Endothelial cell of umbilical vein (primary cell): ENCODE measurements at regions of chr3 and their contacts with region 1.

Region 1: GRCh38 chr3:29759411-29760225 is 478.7 kb downstream of the RBMS3 start:
- DNase-seq: peak; percentile 53
- H3K4me3 ChIP-seq: no peak overlapping the region
- H3K27ac ChIP-seq: peak overlapping the region; percentile 98
- H3K4me1 ChIP-seq: peaks cover 47% of the 10 kb centered on the region
- H3K27me3 ChIP-seq: no peaks in the 10 kb centered on the region
- CTCF ChIP-seq: no peak
- POLR2A ChIP-seq: no peak

Region 2: DNA sequence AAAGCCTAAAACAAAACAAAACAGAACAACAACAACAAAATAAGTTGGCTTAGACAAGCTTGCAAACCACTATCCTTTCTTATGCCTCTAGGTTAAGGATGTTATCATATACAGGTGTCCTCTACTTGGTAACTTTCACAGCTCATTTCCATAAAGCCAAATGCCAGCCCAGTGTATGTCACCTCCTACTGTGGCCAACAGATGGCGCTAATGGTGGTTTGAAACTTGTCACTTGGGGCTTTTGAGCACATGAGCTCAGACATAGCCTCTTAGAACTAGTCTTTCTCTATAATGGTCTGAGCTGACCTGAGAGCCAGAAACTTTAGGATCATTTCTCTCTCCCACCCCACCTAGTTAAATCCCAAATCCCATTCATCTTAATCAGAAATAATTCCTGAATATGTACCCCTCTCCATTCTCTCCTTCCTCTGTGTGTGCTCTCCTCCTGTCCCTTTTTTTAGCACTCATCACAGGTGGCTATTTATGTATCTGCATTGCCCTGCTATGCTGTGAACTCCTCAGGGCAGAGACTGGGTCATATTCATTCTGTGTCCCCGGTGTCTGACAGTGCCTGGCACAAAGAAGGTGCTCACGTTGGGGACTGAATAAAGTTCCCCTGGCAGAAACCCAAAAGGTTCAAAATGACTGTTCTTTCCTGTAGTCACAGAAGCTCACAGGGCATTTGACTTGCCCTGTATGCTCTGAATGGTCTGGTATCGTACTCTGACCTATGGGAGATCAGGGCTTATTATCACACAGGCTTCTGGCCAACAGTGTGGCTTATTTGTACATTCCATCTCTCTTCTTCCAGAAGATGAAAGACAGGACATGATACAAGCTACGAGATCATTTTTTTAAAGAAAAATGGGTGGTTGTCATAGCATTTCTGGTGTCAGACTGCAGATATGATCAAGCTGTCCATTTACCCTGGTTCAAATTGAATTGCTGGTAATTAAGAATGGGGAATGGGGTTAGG is 1091.7 kb before region 1 on chr3:
- CTCF ChIA-PET with region 1: interaction called, 21 read pairs
- POLR2A ChIA-PET with region 1: no interaction called
- dilution Hi-C with region 1: no loop called
- intact Hi-C with region 1: no loop called
- DNase-seq: peak; percentile 79
- H3K4me3 ChIP-seq: no peak overlapping the region
- H3K27ac ChIP-seq: no peak overlapping the region
- H3K4me1 ChIP-seq: no peaks in the 10 kb centered on the region
- H3K27me3 ChIP-seq: peaks cover 0 to 4% of the 10 kb centered on the region in 2 experiments
- CTCF ChIP-seq: peak; percentile 79 to 87
- POLR2A ChIP-seq: no peak

Region 3: GRCh38 chr3:29186982-29187725 is 572.5 kb before region 1 on chr3:
- CTCF ChIA-PET with region 1: no interaction called
- POLR2A ChIA-PET with region 1: no interaction called
- dilution Hi-C with region 1: no loop called
- intact Hi-C with region 1: loop called (anchors 2 kb)
- DNase-seq: peak; percentile 76
- H3K4me3 ChIP-seq: no peak overlapping the region
- H3K27ac ChIP-seq: peak overlapping the region; percentile 90
- H3K4me1 ChIP-seq: peaks cover 17% of the 10 kb centered on the region
- H3K27me3 ChIP-seq: no peaks in the 10 kb centered on the region
- CTCF ChIP-seq: no peak
- POLR2A ChIP-seq: no peak

Region 4: DNA sequence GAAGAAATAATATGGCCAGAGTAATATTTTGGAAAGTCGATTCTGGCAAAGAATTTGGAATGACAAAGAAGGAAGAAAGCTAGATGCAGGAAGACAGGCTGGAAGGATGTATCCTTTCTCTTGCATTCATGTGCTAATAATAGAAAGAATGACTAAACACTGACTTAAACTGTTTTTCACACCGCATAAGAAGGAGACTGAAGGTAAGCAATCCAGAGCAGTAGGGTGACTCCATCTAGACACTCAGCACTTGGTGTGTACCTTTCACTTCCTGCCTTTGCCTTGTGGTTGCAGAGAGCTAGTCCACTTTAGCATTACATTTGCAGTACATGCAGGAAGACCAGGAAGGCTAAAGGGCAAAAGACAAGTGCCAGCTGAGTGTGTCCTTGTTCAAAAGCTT is 244.2 kb before region 1 on chr3:
- CTCF ChIA-PET with region 1: no interaction called
- POLR2A ChIA-PET with region 1: no interaction called
- dilution Hi-C with region 1: no loop called
- intact Hi-C with region 1: loop called (anchors 2 kb)
- DNase-seq: peak; percentile 70
- H3K4me3 ChIP-seq: no peak overlapping the region
- H3K27ac ChIP-seq: peak overlapping the region; percentile 69
- H3K4me1 ChIP-seq: peaks cover 40% of the 10 kb centered on the region
- H3K27me3 ChIP-seq: no peaks in the 10 kb centered on the region
- CTCF ChIP-seq: no peak
- POLR2A ChIP-seq: no peak

Region 5: GRCh38 chr3:29601861-29602585 is 157.6 kb before region 1 on chr3:
- CTCF ChIA-PET with region 1: no interaction called
- POLR2A ChIA-PET with region 1: no interaction called
- dilution Hi-C with region 1: no loop called
- intact Hi-C with region 1: loop called (anchors 2 kb)
- DNase-seq: peak; percentile 97
- H3K4me3 ChIP-seq: no peak overlapping the region
- H3K27ac ChIP-seq: peak overlapping the region; percentile 79
- H3K4me1 ChIP-seq: peaks cover 19% of the 10 kb centered on the region
- H3K27me3 ChIP-seq: no peaks in the 10 kb centered on the region
- CTCF ChIP-seq: no peak
- POLR2A ChIP-seq: peak; percentile 58

Region 6: DNA sequence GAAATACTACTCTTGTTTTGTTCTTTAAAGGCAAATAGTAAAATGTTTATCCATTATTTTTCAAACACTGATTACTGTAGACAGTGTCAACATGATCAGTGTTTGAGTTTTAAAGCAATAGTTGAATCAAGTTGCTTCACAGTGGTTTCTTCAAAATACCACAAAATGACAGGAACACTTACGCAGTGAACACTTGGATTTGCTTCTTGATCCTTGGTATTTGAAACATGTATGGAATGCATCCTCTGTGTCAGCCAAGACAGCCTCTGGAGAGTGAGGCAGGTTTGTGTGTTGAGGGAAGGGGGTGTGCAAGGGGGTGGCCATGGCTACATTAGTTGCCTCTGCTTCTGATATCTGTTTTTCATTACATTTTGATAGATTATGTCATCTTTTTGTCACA is 65.8 kb before region 1 on chr3:
- CTCF ChIA-PET with region 1: interaction called, 6 read pairs
- POLR2A ChIA-PET with region 1: interaction called, 7 read pairs
- dilution Hi-C with region 1: no loop called
- intact Hi-C with region 1: loop called (anchors 1 kb)
- DNase-seq: peak; percentile 78
- H3K4me3 ChIP-seq: no peak overlapping the region
- H3K27ac ChIP-seq: peak overlapping the region; percentile 98
- H3K4me1 ChIP-seq: peaks cover 34% of the 10 kb centered on the region
- H3K27me3 ChIP-seq: no peaks in the 10 kb centered on the region
- CTCF ChIP-seq: no peak
- POLR2A ChIP-seq: no peak

Region 7: DNA sequence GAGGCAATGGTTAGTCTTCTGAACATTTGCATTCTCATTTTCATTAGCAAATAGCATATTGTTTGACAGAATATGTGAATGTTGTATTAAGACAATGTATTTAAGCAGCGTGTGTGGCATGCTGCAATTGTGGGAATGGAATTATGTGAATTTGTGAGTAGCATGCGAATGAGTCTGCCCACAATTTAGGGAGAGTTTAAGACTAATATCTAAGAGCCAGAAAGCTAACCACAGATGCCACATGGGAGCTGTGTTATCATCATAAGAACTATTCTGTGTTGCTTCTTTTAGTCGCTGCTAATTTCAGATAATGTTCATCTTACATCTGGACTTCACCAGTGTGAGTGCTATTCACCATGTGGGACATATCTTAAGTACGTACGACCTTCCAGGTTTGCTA is 15.7 kb after region 1 on chr3:
- CTCF ChIA-PET with region 1: no interaction called
- POLR2A ChIA-PET with region 1: no interaction called
- dilution Hi-C with region 1: no loop called
- intact Hi-C with region 1: no loop called
- DNase-seq: no peak
- H3K4me3 ChIP-seq: no peak overlapping the region
- H3K27ac ChIP-seq: no peak overlapping the region
- H3K4me1 ChIP-seq: no peaks in the 10 kb centered on the region
- H3K27me3 ChIP-seq: no peaks in the 10 kb centered on the region
- CTCF ChIP-seq: no peak
- POLR2A ChIP-seq: no peak